ENCODE measurements at regions of chr1 and their contacts with region 1.

Region 1: DNA sequence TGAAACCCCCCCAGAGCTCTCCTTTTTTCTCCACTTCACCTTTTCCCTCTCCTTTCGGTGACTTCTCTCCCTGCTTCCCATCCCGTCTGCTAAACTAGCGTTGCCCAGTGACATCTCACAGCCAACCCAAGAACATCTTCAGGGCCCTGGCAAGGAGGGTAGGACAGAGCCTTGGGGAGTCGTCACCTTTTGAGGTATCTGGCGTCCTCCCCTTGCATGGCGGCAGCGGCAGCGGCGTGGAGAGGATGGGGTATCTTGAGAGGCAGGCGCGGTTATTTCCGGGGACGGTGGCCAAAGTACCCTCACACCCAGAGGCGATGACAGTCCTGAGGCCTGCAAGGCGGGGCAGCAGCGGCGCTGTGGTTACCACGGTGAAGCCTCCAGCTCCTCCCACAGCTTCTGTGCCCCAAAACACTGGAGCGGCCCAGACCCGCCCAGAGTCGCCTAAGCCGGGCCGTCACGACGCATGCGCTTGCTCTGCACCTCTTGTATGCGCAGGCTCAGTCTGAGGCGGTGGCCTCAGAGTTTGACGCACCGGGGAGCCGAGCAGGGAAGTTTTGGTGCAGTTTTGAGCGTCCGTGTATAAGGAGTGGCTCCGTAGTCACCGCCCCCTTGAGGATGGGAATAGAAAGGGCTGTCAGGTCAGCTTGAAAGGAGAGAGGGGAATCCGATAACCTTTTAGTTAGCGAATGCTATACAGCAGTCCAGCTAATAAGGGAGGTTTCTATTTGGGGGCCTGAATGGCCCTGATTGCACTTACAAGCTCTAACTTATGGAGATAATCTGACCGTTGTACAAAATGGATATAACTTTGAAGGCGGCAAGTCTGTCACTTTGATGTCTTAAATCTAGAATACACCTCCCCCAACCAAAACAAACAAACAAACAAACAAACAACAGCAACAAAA is at the start of gene KIFAP3:
- DNase-seq: peak; percentile 97
- H3K4me3 ChIP-seq: peak within 1 kb of the TSS; percentile 78
- H3K27ac ChIP-seq: peak within 1 kb of the TSS; percentile 28
- H3K4me1 ChIP-seq: peaks cover 23% of the 10 kb centered on the region
- CTCF ChIP-seq: peak; percentile 71
- total RNA-seq, gene KIFAP3: 10.5 and 10.6 TPM in 2 replicates

Region 2: DNA sequence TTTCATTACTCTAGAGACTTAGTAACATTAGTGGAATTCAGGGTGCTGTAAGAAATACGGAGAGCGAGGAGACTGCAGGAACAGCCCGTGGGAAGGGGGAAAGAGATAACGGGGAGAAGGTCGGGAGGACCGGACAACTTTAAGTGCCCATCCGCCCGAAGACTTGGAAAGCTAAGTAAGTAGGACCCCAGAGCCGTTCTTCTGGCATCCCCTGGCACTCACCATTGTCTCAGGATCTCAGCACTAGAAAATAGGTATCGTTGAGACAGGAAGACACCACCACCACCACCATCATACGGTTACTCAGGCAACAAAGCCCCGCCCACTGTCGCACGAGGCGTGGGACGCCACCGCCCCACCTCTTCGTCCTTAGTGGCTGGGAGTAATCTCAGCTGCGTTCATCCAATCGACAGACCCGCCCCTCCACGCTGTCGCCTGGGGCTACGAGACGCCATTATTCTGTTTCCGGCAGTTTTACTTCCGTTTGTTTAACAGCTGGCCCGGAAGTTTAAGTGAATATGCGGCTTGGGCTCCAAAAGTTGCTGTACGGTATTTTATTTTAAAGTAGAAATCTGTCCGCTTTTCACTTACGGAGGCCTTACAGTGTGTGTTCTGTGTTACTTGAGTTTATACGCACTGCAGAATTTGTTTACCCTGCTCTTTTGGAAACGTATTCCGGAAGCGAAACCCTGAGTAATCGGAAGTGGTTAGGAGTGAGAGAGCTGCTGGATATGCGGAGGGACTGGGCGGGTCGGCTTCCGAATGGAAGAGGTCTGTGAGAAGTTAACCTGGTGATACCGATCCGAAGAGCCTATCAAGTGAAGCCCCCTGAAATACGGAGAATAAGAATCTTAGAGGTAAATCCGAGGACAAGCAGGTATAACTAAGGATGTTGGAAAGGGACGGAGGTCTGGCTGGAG is 706.8 kb before region 1 on chr1 and contains the starts of genes BLZF1 and NME7:
- CTCF ChIA-PET with region 1: no interaction called
- POLR2A ChIA-PET with region 1: no interaction called
- intact Hi-C with region 1: loop called (anchors 5 kb)
- DNase-seq: peak; percentile 97
- H3K4me3 ChIP-seq: peak within 1 kb of the TSS; percentile 95
- H3K27ac ChIP-seq: peak within 1 kb of the TSS; percentile 74
- H3K4me1 ChIP-seq: peaks cover 20% of the 10 kb centered on the region
- CTCF ChIP-seq: no peak
- total RNA-seq, gene BLZF1: 4.9 and 7.1 TPM in 2 replicates
- total RNA-seq, gene NME7: 4.2 and 9.3 TPM in 2 replicates

Region 3: DNA sequence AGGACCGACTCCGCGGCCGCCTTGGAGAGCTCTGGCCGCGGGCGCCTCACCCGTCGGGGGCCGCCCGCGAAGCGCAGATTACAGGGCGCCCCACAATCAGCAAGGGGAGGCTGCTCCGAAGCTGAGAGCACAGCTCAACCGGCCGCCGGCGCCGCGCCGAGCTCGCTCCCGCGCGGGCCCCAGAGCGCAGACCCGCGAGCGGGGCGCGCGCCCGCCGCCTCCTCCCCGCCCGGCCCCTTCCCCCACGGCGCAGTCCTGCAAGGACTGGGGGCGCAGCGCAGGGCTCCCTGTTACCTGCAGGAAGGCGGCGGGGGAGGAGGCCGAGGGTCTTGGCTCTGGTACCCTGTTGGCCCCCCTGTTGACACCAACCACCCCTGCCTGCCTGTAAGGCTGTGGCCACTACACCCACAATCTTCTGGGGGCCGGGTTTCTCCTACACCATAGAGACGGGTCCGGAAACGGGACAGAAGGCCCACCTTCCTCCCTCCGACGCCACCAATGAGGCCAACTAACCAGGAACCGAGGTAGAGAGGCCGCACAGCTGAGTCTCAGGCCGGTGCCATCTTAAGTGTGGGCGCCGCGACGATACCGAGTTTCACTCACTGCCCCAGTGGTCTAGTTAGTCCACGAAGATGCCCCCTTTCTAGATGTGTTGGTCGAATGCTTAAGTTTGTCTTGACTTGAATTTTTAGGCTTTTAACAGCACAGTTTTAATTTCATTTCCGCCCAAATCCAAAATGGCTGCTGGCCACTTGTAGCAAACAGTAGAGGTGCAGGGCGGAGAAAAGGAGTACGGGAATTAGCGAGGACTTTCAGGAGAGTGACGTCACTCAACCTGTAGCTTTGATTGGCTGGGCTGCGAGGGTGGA is 180.8 kb before region 1 on chr1 and contains the start of gene SCYL3:
- CTCF ChIA-PET with region 1: interaction called, 3 read pairs
- POLR2A ChIA-PET with region 1: interaction called, 7 read pairs
- intact Hi-C with region 1: loop called (anchors 1 kb)
- DNase-seq: peak; percentile 98
- H3K4me3 ChIP-seq: peak within 1 kb of the TSS; percentile 81
- H3K27ac ChIP-seq: peak within 1 kb of the TSS; percentile 64
- H3K4me1 ChIP-seq: peaks cover 27% of the 10 kb centered on the region
- CTCF ChIP-seq: no peak
- total RNA-seq, gene SCYL3: 5.9 and 7.3 TPM in 2 replicates

Region 4: DNA sequence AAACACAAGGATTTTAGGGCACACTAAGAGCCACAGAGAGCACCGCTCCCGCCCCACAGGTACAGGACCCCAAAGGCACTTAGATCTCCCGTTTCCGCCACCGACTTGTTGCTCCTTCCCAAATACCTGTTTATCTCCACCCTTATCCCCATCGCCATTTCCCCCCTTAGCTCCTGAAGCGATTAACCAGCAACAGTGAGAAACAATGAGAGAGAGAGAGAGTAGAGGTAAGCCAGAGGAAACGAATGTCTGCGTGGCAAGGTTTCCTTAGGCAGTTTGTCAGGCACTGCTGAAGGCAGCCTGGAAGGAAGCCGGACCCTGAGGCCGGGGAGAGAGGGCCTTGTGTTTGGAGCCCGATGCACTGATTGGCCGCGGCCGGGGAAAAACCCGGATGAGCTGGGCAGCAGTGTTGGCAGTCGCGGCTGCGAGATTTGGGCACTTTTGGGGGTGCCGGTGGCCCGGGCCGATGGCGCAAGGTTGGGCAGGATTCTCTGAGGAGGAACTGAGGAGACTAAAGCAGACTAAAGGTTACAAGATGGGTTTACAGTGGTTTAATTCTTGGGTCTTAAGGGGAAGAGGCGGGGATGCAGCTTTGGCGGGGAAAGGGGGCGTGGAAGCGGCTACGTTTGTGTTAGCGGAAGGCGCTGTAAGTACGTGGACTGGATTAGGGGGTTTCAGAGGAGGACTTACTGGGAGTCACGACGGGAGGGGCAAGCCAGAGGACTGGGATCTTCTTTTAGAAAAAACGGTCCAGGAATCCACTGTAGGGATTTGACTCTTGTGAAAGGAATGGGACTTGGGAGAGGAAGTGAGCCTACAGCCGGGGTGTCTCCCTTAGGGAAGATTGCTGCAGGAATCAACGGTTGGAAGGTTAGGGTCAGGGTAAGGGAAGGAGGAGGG is 457.5 kb after region 1 on chr1 and contains the start of gene GORAB:
- CTCF ChIA-PET with region 1: no interaction called
- POLR2A ChIA-PET with region 1: no interaction called
- intact Hi-C with region 1: loop called (anchors 5 kb)
- DNase-seq: peak; percentile 90
- H3K4me3 ChIP-seq: peak within 1 kb of the TSS; percentile 97
- H3K27ac ChIP-seq: peak within 1 kb of the TSS; percentile 68
- H3K4me1 ChIP-seq: peaks cover 16% of the 10 kb centered on the region
- CTCF ChIP-seq: no peak
- total RNA-seq, gene GORAB: 11.5 and 19.8 TPM in 2 replicates